Activated CD4-positive, alpha-beta memory T cell treated with anti-CD3 and anti-CD28 coated beads for 36 hours (primary cell): ENCODE measurements at regions of chr20 and their contacts with region 1.

Region 1: GRCh38 chr20:49594143-49594930 is 26.4 kb upstream of the PTGIS start:
- DNase-seq: peak; percentile 92
- H3K4me3 Mint-ChIP-seq: peak overlapping the region; percentile 95
- H3K27ac Mint-ChIP-seq: peak overlapping the region; percentile 100
- H3K4me1 Mint-ChIP-seq: peaks cover 81% of the 10 kb centered on the region
- H3K27me3 Mint-ChIP-seq: no peaks in the 10 kb centered on the region

Region 2: GRCh38 chr20:48760403-48760983 is 833.8 kb before region 1 on chr20:
- CTCF ChIA-PET with region 1: no interaction called
- POLR2A ChIA-PET with region 1: no interaction called
- intact Hi-C with region 1: loop called (anchors 10 kb)
- DNase-seq: peak; percentile 84
- H3K4me3 Mint-ChIP-seq: peak overlapping the region; percentile 52
- H3K27ac Mint-ChIP-seq: peak overlapping the region; percentile 97
- H3K4me1 Mint-ChIP-seq: peaks cover 86% of the 10 kb centered on the region
- H3K27me3 Mint-ChIP-seq: no peaks in the 10 kb centered on the region

Region 3: DNA sequence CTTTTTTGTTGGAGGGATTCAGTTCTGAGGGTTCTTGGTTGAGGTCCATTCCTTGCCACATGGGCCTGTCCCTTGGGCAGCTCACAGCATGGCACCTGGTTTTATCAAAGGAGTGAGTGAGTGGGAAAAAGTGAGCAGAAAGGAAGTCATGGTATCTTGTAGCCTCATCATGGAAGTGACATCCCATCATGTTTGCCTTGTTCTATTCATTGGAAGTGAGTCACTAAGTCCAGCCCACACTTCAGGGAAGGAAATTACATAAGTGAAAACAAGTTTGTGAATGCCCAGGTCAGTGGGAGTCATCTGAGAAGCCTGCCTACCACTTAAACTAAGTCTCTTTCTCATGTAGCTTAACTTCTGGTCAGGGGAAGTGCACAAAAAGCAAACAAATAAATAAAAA is 283.6 kb before region 1 on chr20:
- CTCF ChIA-PET with region 1: no interaction called
- POLR2A ChIA-PET with region 1: interaction called, 5 read pairs
- intact Hi-C with region 1: loop called (anchors 1 kb)
- DNase-seq: peak; percentile 34
- H3K4me3 Mint-ChIP-seq: no peak overlapping the region
- H3K27ac Mint-ChIP-seq: peak overlapping the region; percentile 71
- H3K4me1 Mint-ChIP-seq: peaks cover 28% of the 10 kb centered on the region
- H3K27me3 Mint-ChIP-seq: no peaks in the 10 kb centered on the region

Region 4: GRCh38 chr20:49534255-49534712 is 60.1 kb before region 1 on chr20:
- CTCF ChIA-PET with region 1: interaction called, 764 read pairs
- POLR2A ChIA-PET with region 1: interaction called, 9 read pairs
- intact Hi-C with region 1: loop called (anchors 1 kb)
- DNase-seq: peak; percentile 74
- H3K4me3 Mint-ChIP-seq: no peak overlapping the region
- H3K27ac Mint-ChIP-seq: peak overlapping the region; percentile 69
- H3K4me1 Mint-ChIP-seq: peaks cover 21% of the 10 kb centered on the region
- H3K27me3 Mint-ChIP-seq: peaks cover 9% of the 10 kb centered on the region

Region 5: DNA sequence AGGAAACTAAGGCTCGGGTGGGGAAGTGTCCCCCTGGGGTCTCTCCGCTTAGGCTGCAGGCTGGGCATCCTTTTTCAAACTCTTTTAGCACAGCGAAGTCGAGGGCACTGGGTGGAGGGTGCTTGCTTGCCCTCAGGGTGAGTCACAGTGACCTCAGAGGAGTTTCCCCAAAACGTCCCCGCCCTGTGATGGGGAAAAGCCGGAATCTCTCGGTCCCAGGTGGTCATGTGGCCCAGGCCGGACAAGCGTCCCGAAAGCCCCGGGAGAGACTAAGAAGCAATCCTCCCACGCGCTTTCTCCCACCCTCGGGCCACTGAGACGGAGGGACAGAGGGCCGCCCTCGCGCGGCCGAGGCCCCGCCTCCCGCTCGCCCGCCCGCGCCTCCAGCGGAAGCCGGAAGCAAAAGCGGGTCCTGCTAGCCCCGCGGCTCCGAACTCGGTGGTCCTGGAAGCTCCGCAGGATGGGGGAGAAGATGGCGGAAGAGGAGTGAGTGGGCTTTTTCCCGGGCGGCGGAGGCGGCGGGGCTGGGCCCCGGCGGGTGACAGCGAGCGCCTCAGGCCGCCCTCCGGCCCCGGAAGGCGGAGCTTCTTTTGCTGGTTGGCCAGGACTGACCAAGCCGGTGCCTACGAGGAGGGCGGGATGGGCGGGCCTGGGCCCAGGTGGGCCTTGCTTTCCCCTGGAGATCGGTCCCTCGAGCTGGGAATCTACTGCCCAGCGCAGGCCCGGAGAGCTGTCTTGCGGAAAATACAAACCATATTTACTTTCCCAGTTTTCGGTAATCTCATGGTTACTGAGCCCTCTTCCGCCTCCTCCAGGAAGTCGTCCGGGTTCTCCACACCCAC is 218.3 kb after region 1 on chr20 and contains the start of gene SLC9A8:
- CTCF ChIA-PET with region 1: no interaction called
- POLR2A ChIA-PET with region 1: interaction called, 3 read pairs
- intact Hi-C with region 1: loop called (anchors 2 kb)
- DNase-seq: peak; percentile 92
- H3K4me3 Mint-ChIP-seq: peak within 1 kb of the TSS; percentile 89
- H3K27ac Mint-ChIP-seq: peak within 1 kb of the TSS; percentile 94
- H3K4me1 Mint-ChIP-seq: peaks cover 34% of the 10 kb centered on the region
- H3K27me3 Mint-ChIP-seq: no peaks in the 10 kb centered on the region
- total RNA-seq, gene SLC9A8: 11.5 to 13.0 TPM